Panc1 (cell line): ENCODE measurements at regions of chr9 and their contacts with region 1.

Region 1: DNA sequence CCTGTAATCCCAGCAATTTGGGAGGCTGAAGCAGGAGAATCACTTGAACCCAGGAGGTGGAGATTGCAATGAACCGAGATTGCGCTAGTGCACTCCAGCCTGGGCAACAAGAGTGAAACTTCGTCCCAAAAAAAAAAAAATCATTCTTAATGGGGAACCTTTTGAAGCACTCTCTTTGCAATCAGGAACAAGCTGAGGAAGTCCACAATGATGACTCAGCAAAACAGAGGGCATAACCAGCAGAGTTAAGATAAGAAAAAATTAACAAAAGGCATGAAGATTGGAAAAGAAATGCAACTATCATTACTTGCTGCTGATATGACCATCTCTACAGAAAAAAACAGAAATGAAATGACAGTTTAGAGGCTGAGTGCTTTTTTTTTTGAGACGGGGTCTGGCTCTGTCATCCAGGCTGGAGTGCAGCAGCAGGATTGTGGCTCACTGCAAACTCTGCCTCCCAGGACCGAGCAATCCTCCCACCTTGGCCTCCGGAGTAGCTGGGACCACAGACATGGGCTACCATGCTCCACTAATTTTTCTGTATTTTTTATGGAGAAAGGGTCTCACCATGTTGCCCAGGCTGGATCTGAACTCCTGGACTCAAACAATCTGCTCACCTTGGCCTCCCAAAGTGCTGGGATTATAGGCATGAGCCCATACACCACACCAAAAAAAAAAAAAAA is 88.0 kb downstream of the FNBP1 start:
- DNase-seq: no peak
- ATAC-seq: no peak
- H3K4me3 ChIP-seq: no peak overlapping the region
- H3K27ac ChIP-seq: no peak overlapping the region
- H3K4me1 ChIP-seq: no peaks in the 10 kb centered on the region; the same call in 1 of the 2 replicates
- H3K27me3 ChIP-seq: no peaks in the 10 kb centered on the region
- CTCF ChIP-seq: no peak

Region 2: DNA sequence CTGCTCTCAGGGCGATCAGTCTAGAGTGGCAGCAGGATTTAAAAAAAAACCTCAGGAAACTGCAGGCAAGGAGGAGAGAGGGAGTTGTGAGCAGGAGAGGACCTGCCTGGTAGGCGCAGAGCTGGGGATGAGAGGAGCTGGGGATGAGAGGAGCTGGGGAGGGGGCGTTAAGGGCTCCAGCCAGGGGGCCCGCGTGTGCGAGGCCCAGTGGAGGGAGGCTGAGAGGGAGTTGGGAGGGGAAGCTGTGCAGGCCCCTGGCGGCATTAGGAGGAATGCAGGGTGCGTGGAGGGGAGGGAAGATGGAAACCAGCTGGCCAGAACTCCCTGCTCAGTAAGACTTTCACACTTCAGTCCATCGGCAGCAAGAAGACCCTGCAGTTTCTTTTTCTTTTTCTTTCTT is 265.3 kb after region 1 on chr9:
- CTCF ChIA-PET with region 1: no interaction called
- POLR2A ChIA-PET with region 1: interaction called, 10 read pairs
- in situ Hi-C with region 1: no loop called
- intact Hi-C with region 1: no loop called
- DNase-seq: no peak
- ATAC-seq: no peak
- H3K4me3 ChIP-seq: no peak overlapping the region
- H3K27ac ChIP-seq: no peak overlapping the region
- H3K4me1 ChIP-seq: no peaks in the 10 kb centered on the region
- H3K27me3 ChIP-seq: no peaks in the 10 kb centered on the region
- CTCF ChIP-seq: no peak